ENCODE measurements at regions of chr2 and their contacts with region 1.

Region 1: GRCh38 chr2:72579591-72580180 is 246.1 kb downstream of the EXOC6B start:
- DNase-seq: peak in 1 of 35 experiments; percentile 44
- ATAC-seq: no peak
- H3K4me3 ChIP-seq: no peak overlapping the region
- H3K4me3 Mint-ChIP-seq: no peak overlapping the region
- H3K27ac ChIP-seq: no peak overlapping the region
- H3K27ac Mint-ChIP-seq: no peak overlapping the region
- H3K4me1 ChIP-seq: no peaks in the 10 kb centered on the region
- H3K4me1 Mint-ChIP-seq: peaks cover 0 to 5% (median 1%) of the 10 kb centered on the region in 3 donors
- H3K27me3 ChIP-seq: no peaks in the 10 kb centered on the region
- H3K27me3 Mint-ChIP-seq: no peaks in the 10 kb centered on the region

Region 2: DNA sequence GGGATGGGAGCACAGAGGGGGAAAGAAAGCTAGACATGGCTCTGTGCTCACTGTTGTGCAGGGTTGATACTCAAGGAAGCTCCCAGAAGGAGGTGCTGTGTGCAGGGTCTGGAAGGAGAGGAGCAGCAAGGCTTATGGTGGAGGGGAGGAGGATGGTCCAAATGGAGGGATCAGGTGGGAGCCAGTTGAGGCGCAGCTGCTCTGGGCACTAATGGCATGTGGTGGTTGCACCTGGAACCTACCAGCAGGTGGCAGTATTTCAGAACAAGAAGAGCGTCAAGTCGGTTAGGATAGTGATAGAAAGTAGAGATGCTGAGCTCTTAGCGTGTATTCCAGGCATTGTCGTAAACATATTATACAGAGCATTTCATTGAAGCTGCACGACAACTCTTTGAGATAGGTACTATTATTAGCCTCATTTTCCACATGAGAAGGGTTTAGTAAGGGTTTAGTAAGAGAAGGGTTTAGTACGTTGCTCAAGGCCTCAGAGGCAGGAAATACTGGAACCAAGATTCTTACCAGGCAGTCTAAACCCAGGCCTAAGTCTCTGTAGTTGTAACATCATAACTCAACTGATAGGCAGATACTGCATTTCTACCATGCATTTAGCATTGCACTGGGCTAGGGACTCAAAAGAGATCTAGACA is 655.7 kb before region 1 on chr2:
- CTCF ChIA-PET with region 1: interaction called, 10 to 16 read pairs
- POLR2A ChIA-PET with region 1: no interaction called
- DNase-seq: peak in 27 of 35 experiments; percentile 9 to 71 (median 27)
- ATAC-seq: peak in 1 of 4 experiments; percentile 33
- H3K4me3 ChIP-seq: no peak overlapping the region
- H3K4me3 Mint-ChIP-seq: no peak overlapping the region
- H3K27ac ChIP-seq: no peak overlapping the region
- H3K27ac Mint-ChIP-seq: no peak overlapping the region
- H3K4me1 ChIP-seq: no peaks in the 10 kb centered on the region
- H3K4me1 Mint-ChIP-seq: no peaks in the 10 kb centered on the region
- H3K27me3 ChIP-seq: peaks cover 0 to 4% of the 10 kb centered on the region in 2 experiments
- H3K27me3 Mint-ChIP-seq: no peaks in the 10 kb centered on the region

Region 3: GRCh38 chr2:71995067-71995665 is 584.5 kb before region 1 on chr2:
- CTCF ChIA-PET with region 1: interaction called in 1 of 2 experiments, 12 read pairs
- POLR2A ChIA-PET with region 1: no interaction called
- DNase-seq: no peak
- ATAC-seq: no peak
- H3K4me3 ChIP-seq: no peak overlapping the region
- H3K4me3 Mint-ChIP-seq: no peak overlapping the region
- H3K27ac ChIP-seq: no peak overlapping the region
- H3K27ac Mint-ChIP-seq: no peak overlapping the region
- H3K4me1 ChIP-seq: no peaks in the 10 kb centered on the region
- H3K4me1 Mint-ChIP-seq: no peaks in the 10 kb centered on the region
- H3K27me3 ChIP-seq: peaks cover 0 to 9% of the 10 kb centered on the region in 2 experiments
- H3K27me3 Mint-ChIP-seq: peaks cover 0 to 3% of the 10 kb centered on the region in 2 donors

Region 4: DNA sequence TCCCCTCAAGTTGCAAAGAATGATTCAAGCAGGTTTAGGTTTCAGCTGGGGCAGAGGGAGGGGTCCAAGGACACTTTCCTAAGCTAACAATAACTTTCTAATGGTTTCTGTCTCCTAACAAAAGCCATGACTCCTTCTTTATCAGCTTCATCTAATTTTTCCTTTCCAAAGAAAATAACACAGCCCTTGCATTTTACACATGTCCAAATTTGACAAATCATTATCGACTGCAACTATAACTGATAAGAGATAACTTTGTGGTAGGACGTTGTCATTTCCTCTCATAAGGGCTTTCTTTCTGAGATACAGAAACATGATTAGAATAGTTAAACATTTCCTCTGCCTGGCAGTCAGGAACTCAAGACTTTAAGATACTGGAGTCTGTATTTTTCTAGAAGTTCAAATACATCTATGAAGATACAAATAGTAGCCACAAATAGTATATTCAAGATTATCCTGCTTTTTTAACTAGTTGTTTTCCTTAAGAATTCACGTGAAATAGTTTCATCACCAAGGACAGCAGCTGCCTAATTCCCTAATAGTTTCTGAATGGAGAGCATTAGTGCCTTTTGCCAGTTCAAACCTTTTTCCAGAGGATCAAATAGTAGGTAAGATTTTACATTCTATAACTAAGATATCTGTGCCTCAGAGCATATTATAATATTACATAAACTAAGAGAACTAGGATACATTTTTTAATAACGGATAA is 17.1 kb before region 1 on chr2:
- CTCF ChIA-PET with region 1: interaction called, 4 to 12 read pairs
- POLR2A ChIA-PET with region 1: no interaction called
- DNase-seq: no peak
- ATAC-seq: no peak
- H3K4me3 ChIP-seq: no peak overlapping the region
- H3K4me3 Mint-ChIP-seq: no peak overlapping the region
- H3K27ac ChIP-seq: no peak overlapping the region
- H3K27ac Mint-ChIP-seq: no peak overlapping the region
- H3K4me1 ChIP-seq: peaks cover 0 to 2% of the 10 kb centered on the region in 2 experiments
- H3K4me1 Mint-ChIP-seq: peaks cover 12 to 16% (median 13%) of the 10 kb centered on the region in 3 donors
- H3K27me3 ChIP-seq: no peaks in the 10 kb centered on the region
- H3K27me3 Mint-ChIP-seq: no peaks in the 10 kb centered on the region

Measured in T-cell (primary cell).